Right ventricle myocardium superior (tissue), 1 donor: ENCODE measurements at regions of chr4 and their contacts with region 1.

Region 1: GRCh38 chr4:7295911-7296660 is 103.7 kb downstream of the SORCS2 start:
- DNase-seq: peak; percentile 57
- ATAC-seq: peak; percentile 75

Region 2: GRCh38 chr4:7192252-7193029 is 103.6 kb before region 1 on chr4 and contains the start of gene SORCS2:
- intact Hi-C with region 1: loop called (anchors 2 kb)
- DNase-seq: peak; percentile 78
- ATAC-seq: peak; percentile 94
- total RNA-seq, gene SORCS2: 1.2 TPM